PC-3 (cell line): ENCODE measurements at regions of chr6 and their contacts with region 1.

Region 1: DNA sequence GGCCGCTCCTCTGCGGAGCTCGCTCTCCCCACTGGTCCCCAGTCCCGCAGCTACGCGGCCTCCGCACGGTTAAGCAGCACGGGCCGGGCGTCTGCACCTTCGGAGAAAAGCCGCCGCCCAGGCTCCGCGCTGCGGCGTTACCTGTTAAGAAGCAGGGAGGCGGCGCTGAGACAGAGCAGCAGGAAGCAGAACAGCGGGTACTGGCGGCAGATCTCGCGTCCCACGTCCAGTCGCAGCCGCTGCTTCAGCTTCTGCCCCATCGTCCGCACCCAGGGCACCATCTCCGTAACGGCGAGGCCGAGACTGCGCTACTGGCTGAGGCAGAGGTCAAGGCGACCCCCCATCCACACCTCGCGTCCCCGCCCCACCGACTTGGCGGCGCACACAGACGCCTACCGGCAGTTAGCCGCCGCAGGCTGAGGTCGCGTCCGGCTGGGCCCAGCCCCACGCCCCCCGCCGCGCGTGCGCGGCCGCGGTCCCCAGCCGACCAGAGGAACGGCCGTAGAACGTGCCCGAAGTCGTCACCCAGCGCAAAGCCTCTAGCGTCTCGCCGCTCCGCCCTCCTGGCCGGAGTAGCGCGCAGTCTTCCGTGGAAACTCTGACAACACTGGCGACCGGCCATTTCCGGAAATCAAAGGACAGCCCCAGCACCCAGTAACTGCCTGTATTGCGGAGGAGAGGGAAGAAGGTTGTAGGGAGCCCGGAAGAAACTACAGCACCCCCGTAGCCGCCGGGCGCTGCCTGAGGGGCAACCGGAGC is at the start of gene SNX14:
- DNase-seq: peak; percentile 92
- ATAC-seq: peak; percentile 92
- H3K4me3 ChIP-seq: peak within 1 kb of the TSS; percentile 91
- H3K27ac ChIP-seq: peak within 1 kb of the TSS; percentile 76
- H3K4me1 ChIP-seq: peaks cover 21% of the 10 kb centered on the region
- H3K27me3 ChIP-seq: no peaks in the 10 kb centered on the region
- CTCF ChIP-seq: no peak
- total RNA-seq, gene SNX14: 64.4 and 65.4 TPM in 2 replicates

Region 2: DNA sequence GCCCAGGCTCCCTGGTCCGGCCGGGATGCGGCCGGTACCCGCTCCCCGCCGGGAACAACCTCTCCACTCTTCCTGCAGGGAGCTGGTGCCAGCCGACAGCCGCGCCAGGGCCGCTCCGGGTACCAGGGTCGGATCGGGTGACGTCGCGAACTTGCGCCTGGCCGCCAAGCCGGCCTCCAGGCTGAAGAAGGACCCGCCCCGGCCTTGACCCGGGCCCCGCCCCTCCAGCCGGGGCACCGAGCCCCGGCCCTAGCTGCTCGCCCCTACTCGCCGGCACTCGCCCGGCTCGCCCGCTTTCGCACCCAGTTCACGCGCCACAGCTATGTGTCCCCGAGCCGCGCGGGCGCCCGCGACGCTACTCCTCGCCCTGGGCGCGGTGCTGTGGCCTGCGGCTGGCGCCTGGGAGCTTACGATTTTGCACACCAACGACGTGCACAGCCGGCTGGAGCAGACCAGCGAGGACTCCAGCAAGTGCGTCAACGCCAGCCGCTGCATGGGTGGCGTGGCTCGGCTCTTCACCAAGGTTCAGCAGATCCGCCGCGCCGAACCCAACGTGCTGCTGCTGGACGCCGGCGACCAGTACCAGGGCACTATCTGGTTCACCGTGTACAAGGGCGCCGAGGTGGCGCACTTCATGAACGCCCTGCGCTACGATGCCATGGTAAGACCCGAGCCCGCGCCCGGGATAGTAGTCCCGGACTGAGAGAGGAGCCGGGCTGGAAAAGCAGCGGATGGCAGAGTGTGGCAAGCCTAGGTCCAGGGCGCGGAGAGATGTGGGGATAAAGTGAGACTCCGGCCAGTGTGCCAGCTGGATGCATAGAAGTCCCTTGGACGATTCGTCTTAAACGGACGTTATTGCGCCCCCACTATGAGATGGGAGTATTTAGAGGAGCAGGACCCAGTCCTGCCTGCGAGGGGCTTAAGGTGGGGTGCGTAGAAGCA is 143.5 kb before region 1 on chr6 and contains the start of gene NT5E:
- CTCF ChIA-PET with region 1: no interaction called
- POLR2A ChIA-PET with region 1: interaction called, 6 read pairs
- intact Hi-C with region 1: loop called (anchors 5 kb)
- DNase-seq: peak; percentile 65
- ATAC-seq: peak; percentile 79
- H3K4me3 ChIP-seq: peak within 1 kb of the TSS; percentile 87
- H3K27ac ChIP-seq: peak within 1 kb of the TSS; percentile 66
- H3K4me1 ChIP-seq: peaks cover 29% of the 10 kb centered on the region
- H3K27me3 ChIP-seq: no peaks in the 10 kb centered on the region
- CTCF ChIP-seq: peak; percentile 31; the same call in 1 of the 2 replicates
- total RNA-seq, gene NT5E: 9.0 and 15.8 TPM in 2 replicates

Region 3: DNA sequence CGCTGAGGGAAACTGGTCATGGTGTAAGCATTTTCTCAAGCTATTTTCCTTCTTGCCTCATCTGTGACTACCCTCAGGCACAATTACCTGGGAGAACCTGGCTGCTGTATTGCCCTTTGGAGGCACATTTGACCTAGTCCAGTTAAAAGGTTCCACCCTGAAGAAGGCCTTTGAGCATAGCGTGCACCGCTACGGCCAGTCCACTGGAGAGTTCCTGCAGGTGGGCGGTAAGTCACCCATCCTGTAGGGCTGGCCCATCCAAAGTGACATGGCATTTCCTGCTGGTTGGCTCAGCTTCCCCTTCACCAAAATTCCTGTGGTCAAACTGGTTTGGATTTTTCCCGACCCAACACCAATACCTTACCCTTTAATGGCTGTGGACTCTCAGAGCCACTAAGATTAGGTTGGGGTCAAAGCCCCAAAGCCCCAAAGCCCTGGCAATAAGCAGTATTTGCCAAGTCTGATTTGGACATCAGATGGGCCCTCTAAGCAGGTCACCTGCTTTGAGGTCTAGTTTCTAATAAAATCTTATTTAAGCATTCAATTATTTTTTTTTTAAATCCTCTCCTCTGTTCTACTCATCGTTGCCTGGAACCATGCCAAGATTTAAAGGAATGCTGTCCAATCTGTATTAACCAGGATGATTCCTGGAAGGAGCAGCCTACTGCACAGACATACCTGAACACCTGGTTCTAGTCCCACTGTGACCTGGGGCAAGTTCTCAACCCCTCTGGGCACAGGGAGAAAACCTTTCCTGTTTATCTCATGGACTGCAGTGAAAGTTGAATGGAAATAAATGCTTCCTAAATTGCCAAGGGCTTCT is 103.0 kb before region 1 on chr6:
- CTCF ChIA-PET with region 1: no interaction called
- POLR2A ChIA-PET with region 1: no interaction called
- intact Hi-C with region 1: no loop called
- DNase-seq: peak; percentile 77
- ATAC-seq: peak; percentile 43
- H3K4me3 ChIP-seq: no peak overlapping the region
- H3K27ac ChIP-seq: peak overlapping the region; percentile 56
- H3K4me1 ChIP-seq: peaks cover 24% of the 10 kb centered on the region
- H3K27me3 ChIP-seq: no peaks in the 10 kb centered on the region
- CTCF ChIP-seq: no peak

Region 4: DNA sequence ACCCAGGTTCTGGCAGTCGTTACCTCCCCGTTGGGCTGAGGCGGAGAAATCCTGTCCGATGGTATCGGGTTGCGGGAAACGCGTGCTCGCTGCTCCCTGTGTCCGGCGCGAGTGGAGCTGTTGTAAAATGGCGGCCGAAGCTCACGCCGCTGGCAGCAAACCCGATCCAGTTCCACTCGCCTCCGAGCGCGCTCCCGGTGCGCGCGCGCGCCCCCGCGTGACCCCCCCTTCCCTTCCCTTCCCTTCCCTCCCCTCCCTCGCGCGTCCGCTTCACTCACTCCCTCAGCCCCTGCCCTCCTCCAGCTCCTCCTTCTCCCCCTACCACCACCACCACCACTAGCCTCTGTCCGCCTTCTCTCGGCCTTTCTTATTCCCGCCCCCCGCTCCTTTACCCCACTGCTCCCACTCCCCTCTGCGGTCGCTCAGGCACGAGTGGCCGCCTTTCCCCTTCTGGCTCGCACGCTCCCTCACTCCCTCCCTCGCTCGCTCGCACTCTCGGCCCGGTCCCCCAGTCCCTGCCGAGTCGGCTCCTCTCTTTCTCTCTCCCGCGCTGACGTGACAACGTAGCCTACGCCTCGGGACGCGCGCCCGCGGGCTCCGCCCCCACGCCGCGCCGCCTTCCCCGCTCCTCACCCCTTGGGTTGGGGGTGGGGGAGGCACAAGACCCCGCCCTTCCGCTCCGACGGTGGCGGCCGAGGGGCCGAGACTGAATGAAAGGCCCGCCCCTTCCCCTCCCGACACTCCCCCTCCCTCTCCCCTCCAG is 49.3 kb after region 1 on chr6 and contains the start of gene SYNCRIP:
- CTCF ChIA-PET with region 1: no interaction called
- POLR2A ChIA-PET with region 1: no interaction called
- intact Hi-C with region 1: loop called (anchors 2 kb)
- DNase-seq: peak; percentile 96
- ATAC-seq: peak; percentile 71
- H3K4me3 ChIP-seq: peak within 1 kb of the TSS; percentile 89
- H3K27ac ChIP-seq: peak within 1 kb of the TSS; percentile 98
- H3K4me1 ChIP-seq: peaks cover 17% of the 10 kb centered on the region
- H3K27me3 ChIP-seq: no peaks in the 10 kb centered on the region
- CTCF ChIP-seq: no peak
- total RNA-seq, gene SYNCRIP: 63.8 and 76.6 TPM in 2 replicates

Region 5: GRCh38 chr6:85678602-85679444 is 85.2 kb after region 1 on chr6:
- CTCF ChIA-PET with region 1: no interaction called
- POLR2A ChIA-PET with region 1: interaction called, 6 read pairs
- intact Hi-C with region 1: loop called (anchors 10 kb)
- DNase-seq: peak; percentile 96
- ATAC-seq: peak; percentile 83
- H3K4me3 ChIP-seq: peak overlapping the region; percentile 99
- H3K27ac ChIP-seq: peak overlapping the region; percentile 89
- H3K4me1 ChIP-seq: peaks cover 25% of the 10 kb centered on the region
- H3K27me3 ChIP-seq: no peaks in the 10 kb centered on the region
- CTCF ChIP-seq: no peak